ENCODE measurements at regions of chr15 and their contacts with region 1.

Region 1: DNA sequence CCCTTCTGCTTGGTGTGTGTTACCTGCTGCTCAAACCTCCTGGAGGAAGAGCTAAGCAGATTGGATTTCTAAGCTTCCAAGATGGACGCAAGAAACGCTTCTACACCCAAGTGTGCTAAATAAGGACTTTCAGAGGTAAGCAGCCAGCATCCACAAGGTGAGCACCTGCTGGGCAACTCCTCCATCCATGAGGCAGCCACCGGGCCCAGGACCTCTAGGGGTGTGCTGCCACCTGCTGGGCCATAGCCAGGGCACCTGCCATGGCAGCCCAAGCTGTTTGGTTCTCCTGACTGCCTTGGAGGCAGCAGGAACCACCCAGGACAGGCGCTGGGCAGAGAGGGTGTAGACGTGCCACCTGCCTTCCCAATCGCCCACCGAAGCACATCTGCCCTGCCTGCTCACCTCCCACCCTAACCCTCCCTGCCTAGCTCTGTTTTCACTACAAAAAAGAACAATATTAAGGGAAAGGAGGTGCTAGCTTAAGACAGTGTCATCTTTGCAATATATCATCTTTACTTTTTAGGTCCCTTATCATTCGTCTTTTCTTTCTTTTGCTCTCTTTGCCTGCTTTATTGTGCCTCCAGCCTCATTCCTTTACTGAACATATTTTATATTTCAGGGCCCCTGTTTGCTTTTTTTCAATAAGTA is 12.9 kb downstream of the C15orf62 start:
- DNase-seq: peak; percentile 81
- H3K4me3 ChIP-seq: 0 out of 4 replicates have a peak overlapping the region, but pooled peaks of 1 of the 2 experiments have one; percentile 16
- H3K27ac ChIP-seq: no peak overlapping the region
- H3K4me1 ChIP-seq: peaks cover 2 to 10% of the 10 kb centered on the region in 2 experiments; a peak in 3 of 4 replicates
- H3K27me3 ChIP-seq: no peaks in the 10 kb centered on the region
- CTCF ChIP-seq: peak; percentile 58
- EP300 ChIP-seq: no peak
- RAD21 ChIP-seq: peak; percentile 93

Region 2: GRCh38 chr15:40694688-40695468 is 87.8 kb before region 1 on chr15 and contains the start of gene RAD51:
- CTCF ChIA-PET with region 1: interaction called, 10 read pairs
- POLR2A ChIA-PET with region 1: interaction called, 3 read pairs
- DNase-seq: peak; percentile 95
- H3K4me3 ChIP-seq: peak within 1 kb of the TSS; percentile 72 to 90
- H3K27ac ChIP-seq: peak within 1 kb of the TSS; percentile 96 to 97
- H3K4me1 ChIP-seq: peaks cover 0 to 4% of the 10 kb centered on the region in 2 experiments; a peak in 1 of 4 replicates
- H3K27me3 ChIP-seq: no peaks in the 10 kb centered on the region
- CTCF ChIP-seq: no peak
- EP300 ChIP-seq: no peak
- RAD21 ChIP-seq: no peak
- polyA plus RNA-seq, gene RAD51: 6.6 and 7.6 TPM in 2 replicates

Region 3: GRCh38 chr15:40706121-40706520 is 76.6 kb before region 1 on chr15:
- CTCF ChIA-PET with region 1: interaction called, 22 read pairs
- POLR2A ChIA-PET with region 1: no interaction called
- DNase-seq: no peak
- H3K4me3 ChIP-seq: no peak overlapping the region
- H3K27ac ChIP-seq: no peak overlapping the region
- H3K4me1 ChIP-seq: no peaks in the 10 kb centered on the region
- H3K27me3 ChIP-seq: no peaks in the 10 kb centered on the region
- CTCF ChIP-seq: no peak
- EP300 ChIP-seq: no peak
- RAD21 ChIP-seq: no peak

Region 4: DNA sequence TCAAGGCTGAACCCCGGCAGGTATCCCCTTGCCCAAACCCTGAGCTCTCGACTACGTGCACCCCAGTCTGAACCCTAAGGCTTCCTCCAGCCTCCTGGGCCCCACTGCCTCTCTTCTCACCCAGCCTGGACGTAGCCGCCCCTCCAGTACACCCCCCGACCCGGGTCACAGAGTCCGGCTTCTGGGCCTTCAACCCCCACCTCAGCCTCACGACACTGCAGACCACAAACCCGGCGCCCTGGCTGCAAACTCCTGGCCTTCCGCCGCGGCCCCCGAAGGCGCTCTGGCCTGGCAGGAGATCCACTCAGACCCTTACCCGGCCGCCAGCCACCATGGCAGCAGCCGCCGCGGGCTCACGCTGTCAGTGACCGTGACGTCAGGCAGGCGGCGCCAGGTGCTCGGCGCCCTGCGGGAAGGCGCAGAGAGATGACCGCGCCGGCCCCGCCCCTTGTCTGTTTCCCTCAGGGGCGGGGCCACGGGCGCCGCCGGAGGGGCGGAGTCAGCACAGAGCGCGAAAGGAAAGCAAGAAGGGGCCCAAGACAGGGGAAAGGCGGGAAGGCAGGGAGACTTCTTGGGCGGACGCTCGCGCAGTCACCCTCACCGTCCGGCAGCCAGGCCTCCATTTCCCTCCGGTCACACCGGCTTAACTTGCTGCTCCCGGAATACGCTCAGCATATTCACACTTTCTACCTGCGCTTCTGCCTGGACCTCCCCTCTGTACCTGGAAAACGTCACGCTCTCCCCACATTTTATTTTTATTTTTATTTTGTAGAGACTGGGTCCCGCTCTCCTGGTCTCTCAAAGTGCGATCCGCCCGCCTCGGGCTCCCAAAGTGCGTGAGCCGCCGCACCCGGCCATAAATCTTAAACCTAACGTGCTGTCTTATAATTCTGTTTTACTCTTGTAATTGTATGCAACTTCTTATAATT is 27.6 kb before region 1 on chr15 and contains the start of gene RMDN3:
- CTCF ChIA-PET with region 1: interaction called, 555 read pairs
- POLR2A ChIA-PET with region 1: interaction called, 3 read pairs
- DNase-seq: peak; percentile 94
- H3K4me3 ChIP-seq: peak within 1 kb of the TSS; percentile 57 to 82
- H3K27ac ChIP-seq: peak within 1 kb of the TSS; percentile 30 to 90; a peak in 3 of 4 replicates
- H3K4me1 ChIP-seq: peaks cover 0 to 23% of the 10 kb centered on the region in 2 experiments; a peak in 2 of 4 replicates
- H3K27me3 ChIP-seq: no peaks in the 10 kb centered on the region
- CTCF ChIP-seq: no peak
- EP300 ChIP-seq: no peak; a peak in 1 of 4 replicates
- RAD21 ChIP-seq: no peak
- polyA plus RNA-seq, gene RMDN3: 30.0 and 33.0 TPM in 2 replicates

Region 5: GRCh38 chr15:40763801-40764732 is 18.6 kb before region 1 on chr15 and contains the start of gene GCHFR:
- CTCF ChIA-PET with region 1: interaction called, 118 read pairs
- POLR2A ChIA-PET with region 1: no interaction called
- DNase-seq: peak; percentile 67
- H3K4me3 ChIP-seq: no peak within 1 kb of the TSS; a peak in 1 of 4 replicates
- H3K27ac ChIP-seq: peak within 1 kb of the TSS in 1 of 2 experiments; percentile 34; a peak in 1 of 4 replicates
- H3K4me1 ChIP-seq: peaks cover 32 to 53% of the 10 kb centered on the region in 2 experiments; a peak in 3 of 4 replicates
- H3K27me3 ChIP-seq: no peaks in the 10 kb centered on the region
- CTCF ChIP-seq: no peak
- EP300 ChIP-seq: no peak
- RAD21 ChIP-seq: no peak
- polyA plus RNA-seq, gene GCHFR: 0.60 and 0.67 TPM in 2 replicates

Region 6: DNA sequence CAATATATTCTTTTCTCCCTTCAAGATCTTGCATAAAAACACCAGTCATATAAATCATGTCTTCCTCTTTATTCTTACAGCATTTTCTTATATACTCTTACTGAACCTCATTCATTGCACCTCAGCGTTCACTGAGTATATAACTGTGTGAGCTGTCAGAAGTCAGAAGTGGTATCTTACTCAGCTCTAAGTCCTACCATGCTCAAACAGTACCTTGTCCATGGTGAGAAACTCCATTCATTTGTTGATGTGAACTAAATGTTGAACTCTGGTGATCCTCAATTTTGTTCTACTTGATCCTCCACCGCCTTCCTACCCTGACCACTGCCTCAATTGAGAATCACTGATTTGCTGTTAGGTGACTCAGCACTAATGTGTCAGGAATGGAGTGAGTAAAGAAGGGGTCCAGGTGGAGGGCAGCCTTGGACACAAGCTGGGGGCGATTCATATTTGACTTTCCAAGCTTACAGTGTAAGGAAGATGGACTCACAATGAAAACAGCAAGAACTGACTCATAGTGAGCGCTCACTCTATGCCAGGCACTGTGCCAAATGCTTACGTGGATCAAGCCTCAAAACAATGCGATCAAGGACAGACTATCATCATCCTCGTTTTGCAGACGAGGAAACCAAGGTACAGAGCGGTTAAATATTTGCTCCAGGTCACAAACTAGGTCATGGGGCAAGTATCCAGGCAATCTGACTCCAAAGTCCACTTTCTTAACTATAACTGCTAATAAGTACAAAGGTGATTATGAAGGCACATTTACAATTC is 10.7 kb after region 1 on chr15:
- CTCF ChIA-PET with region 1: interaction called, 24 read pairs
- POLR2A ChIA-PET with region 1: no interaction called
- DNase-seq: no peak
- H3K4me3 ChIP-seq: no peak overlapping the region
- H3K27ac ChIP-seq: peak overlapping the region in 1 of 2 experiments; percentile 86; a peak in 3 of 4 replicates
- H3K4me1 ChIP-seq: peaks cover 0 to 4% of the 10 kb centered on the region in 2 experiments; a peak in 1 of 4 replicates
- H3K27me3 ChIP-seq: no peaks in the 10 kb centered on the region
- CTCF ChIP-seq: no peak
- EP300 ChIP-seq: no peak
- RAD21 ChIP-seq: no peak

Region 7: GRCh38 chr15:40807028-40807887 is 24.6 kb after region 1 on chr15 and contains the starts of genes DNAJC17 and ZFYVE19:
- CTCF ChIA-PET with region 1: interaction called, 15 read pairs
- POLR2A ChIA-PET with region 1: interaction called, 3 read pairs
- DNase-seq: peak; percentile 92
- H3K4me3 ChIP-seq: peak within 1 kb of the TSS; percentile 94 to 98
- H3K27ac ChIP-seq: peak within 1 kb of the TSS; percentile 75 to 95
- H3K4me1 ChIP-seq: peaks cover 4 to 15% of the 10 kb centered on the region in 2 experiments; a peak in 1 of 4 replicates
- H3K27me3 ChIP-seq: no peaks in the 10 kb centered on the region
- CTCF ChIP-seq: no peak
- EP300 ChIP-seq: no peak
- RAD21 ChIP-seq: no peak
- polyA plus RNA-seq, gene DNAJC17: 53.1 and 61.6 TPM in 2 replicates
- polyA plus RNA-seq, gene ZFYVE19: 35.5 and 37.8 TPM in 2 replicates